CD8-positive, alpha-beta T cell (primary cell): ENCODE measurements at regions of chr1 and their contacts with region 1.

Region 1: DNA sequence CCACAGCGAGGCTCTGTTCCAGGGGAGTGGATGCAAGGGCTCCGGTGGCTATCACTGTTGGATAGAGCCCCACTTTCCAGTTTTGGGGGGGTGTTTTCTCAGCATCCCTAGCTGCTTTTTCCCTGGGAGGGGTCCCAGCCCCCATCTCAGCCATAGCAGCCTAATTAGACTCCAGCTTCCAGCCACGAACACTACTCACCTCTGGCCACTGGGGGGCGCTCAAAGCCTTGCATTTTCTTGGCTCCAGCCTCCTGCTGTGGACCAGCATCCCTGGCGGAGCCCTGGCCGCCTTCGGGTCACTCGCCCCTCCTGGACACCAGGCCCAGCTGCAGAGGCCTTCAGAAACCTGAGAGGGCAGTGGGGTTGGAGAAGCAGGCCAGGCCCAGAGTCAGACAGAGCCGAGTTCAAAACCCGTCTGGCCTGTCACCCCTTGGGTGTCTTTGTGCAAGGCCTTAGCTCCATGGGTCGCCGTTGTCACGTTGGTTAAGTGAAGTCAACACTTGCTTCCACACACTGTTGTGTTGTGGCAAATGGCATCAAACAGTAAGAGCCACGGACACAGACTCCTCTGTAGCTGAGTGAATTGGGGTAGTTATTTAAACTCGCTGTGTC is 93.5 kb upstream of the ACTL8 start:
- DNase-seq: peak; percentile 6 to 64 (median 42)
- ATAC-seq: no peak
- H3K4me3 ChIP-seq: no peak overlapping the region
- H3K4me3 Mint-ChIP-seq: no peak overlapping the region
- H3K27ac ChIP-seq: no peak overlapping the region
- H3K27ac Mint-ChIP-seq: no peak overlapping the region
- H3K4me1 ChIP-seq: no peaks in the 10 kb centered on the region
- H3K4me1 Mint-ChIP-seq: no peaks in the 10 kb centered on the region
- H3K27me3 ChIP-seq: no peaks in the 10 kb centered on the region
- H3K27me3 Mint-ChIP-seq: no peaks in the 10 kb centered on the region
- CTCF ChIP-seq: peak; percentile 84

Region 2: DNA sequence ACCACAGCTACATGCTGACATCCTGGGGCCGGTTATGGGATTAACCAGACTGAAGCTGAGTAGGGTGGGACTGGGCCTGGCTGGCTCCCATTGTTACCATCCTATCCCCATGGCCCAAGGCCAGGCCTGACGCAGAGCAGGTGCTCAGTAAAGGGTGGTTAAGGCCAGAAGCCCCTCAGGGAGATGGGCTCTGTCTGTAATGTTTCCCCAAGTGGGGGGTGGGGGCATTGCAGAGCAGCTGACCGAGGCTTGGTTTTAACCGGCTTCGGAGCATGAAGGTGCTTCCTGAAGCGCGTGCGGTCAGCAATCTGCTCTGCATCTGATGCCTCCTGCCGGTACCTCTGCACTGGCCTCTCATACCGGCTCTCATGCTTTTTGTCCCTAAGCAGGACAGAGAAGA is 10.1 kb after region 1 on chr1:
- CTCF ChIA-PET with region 1: interaction called, 11 read pairs
- POLR2A ChIA-PET with region 1: no interaction called
- intact Hi-C with region 1: no loop called
- DNase-seq: no peak
- ATAC-seq: no peak
- H3K4me3 ChIP-seq: no peak overlapping the region
- H3K4me3 Mint-ChIP-seq: no peak overlapping the region
- H3K27ac ChIP-seq: no peak overlapping the region
- H3K27ac Mint-ChIP-seq: no peak overlapping the region
- H3K4me1 ChIP-seq: no peaks in the 10 kb centered on the region
- H3K4me1 Mint-ChIP-seq: no peaks in the 10 kb centered on the region
- H3K27me3 ChIP-seq: no peaks in the 10 kb centered on the region
- H3K27me3 Mint-ChIP-seq: peaks cover 3% of the 10 kb centered on the region
- CTCF ChIP-seq: no peak

Region 3: DNA sequence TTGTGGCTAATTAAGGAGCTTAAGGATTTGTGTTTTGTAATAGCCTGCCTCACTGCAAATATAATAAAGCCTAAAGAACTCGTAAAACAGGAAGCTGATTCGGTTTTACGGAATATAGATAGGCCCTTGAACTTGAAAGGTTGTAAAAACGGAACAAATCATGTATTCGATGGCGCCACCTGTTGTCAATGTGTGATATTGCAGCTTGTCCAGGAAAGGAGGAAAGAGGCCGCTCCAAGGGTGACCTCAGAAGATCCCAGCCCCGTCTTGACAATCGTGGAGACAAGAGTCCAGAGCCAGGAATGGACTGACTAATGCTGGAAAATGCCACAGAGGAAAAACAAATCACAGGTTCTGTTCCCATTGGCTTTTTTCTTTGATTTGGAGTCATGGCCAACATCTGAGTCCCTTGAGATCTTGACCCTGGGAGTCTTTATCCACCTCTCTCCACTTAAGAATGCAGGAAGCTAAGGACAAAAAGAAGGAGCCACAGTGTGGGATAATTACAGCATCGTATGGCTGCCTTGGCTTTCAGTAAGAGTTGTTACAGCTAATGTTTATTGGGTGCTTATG is 438.9 kb after region 1 on chr1:
- CTCF ChIA-PET with region 1: interaction called, 9 read pairs
- POLR2A ChIA-PET with region 1: no interaction called
- intact Hi-C with region 1: loop called in 1 of 2 experiments (anchors 2 kb)
- DNase-seq: peak in 7 of 9 experiments; percentile 5 to 54 (median 39)
- ATAC-seq: no peak
- H3K4me3 ChIP-seq: no peak overlapping the region
- H3K4me3 Mint-ChIP-seq: no peak overlapping the region
- H3K27ac ChIP-seq: no peak overlapping the region
- H3K27ac Mint-ChIP-seq: no peak overlapping the region
- H3K4me1 ChIP-seq: no peaks in the 10 kb centered on the region
- H3K4me1 Mint-ChIP-seq: no peaks in the 10 kb centered on the region
- H3K27me3 ChIP-seq: peaks cover 0 to 4% of the 10 kb centered on the region in 2 experiments
- H3K27me3 Mint-ChIP-seq: peaks cover 27% of the 10 kb centered on the region
- CTCF ChIP-seq: peak; percentile 65

Region 4: GRCh38 chr1:18299441-18300338 is 638.0 kb after region 1 on chr1:
- CTCF ChIA-PET with region 1: no interaction called
- POLR2A ChIA-PET with region 1: no interaction called
- intact Hi-C with region 1: loop called in 1 of 2 experiments (anchors 5 kb)
- DNase-seq: peak in 3 of 9 experiments; percentile 1 to 22 (median 14)
- ATAC-seq: no peak
- H3K4me3 ChIP-seq: no peak overlapping the region
- H3K4me3 Mint-ChIP-seq: no peak overlapping the region
- H3K27ac ChIP-seq: no peak overlapping the region
- H3K27ac Mint-ChIP-seq: no peak overlapping the region
- H3K4me1 ChIP-seq: no peaks in the 10 kb centered on the region
- H3K4me1 Mint-ChIP-seq: no peaks in the 10 kb centered on the region
- H3K27me3 ChIP-seq: no peaks in the 10 kb centered on the region
- H3K27me3 Mint-ChIP-seq: peaks cover 20% of the 10 kb centered on the region
- CTCF ChIP-seq: peak; percentile 68

Region 5: GRCh38 chr1:18575620-18576019 is 914.0 kb after region 1 on chr1:
- CTCF ChIA-PET with region 1: no interaction called
- POLR2A ChIA-PET with region 1: no interaction called
- intact Hi-C with region 1: loop called in 1 of 2 experiments (anchors 2 kb)
- DNase-seq: peak in 8 of 9 experiments; percentile 16 to 61 (median 47)
- ATAC-seq: no peak
- H3K4me3 ChIP-seq: no peak overlapping the region
- H3K4me3 Mint-ChIP-seq: no peak overlapping the region
- H3K27ac ChIP-seq: no peak overlapping the region
- H3K27ac Mint-ChIP-seq: no peak overlapping the region
- H3K4me1 ChIP-seq: no peaks in the 10 kb centered on the region
- H3K4me1 Mint-ChIP-seq: no peaks in the 10 kb centered on the region
- H3K27me3 ChIP-seq: peaks cover 0 to 3% of the 10 kb centered on the region in 2 experiments
- H3K27me3 Mint-ChIP-seq: peaks cover 10% of the 10 kb centered on the region
- CTCF ChIP-seq: no peak

Region 6: DNA sequence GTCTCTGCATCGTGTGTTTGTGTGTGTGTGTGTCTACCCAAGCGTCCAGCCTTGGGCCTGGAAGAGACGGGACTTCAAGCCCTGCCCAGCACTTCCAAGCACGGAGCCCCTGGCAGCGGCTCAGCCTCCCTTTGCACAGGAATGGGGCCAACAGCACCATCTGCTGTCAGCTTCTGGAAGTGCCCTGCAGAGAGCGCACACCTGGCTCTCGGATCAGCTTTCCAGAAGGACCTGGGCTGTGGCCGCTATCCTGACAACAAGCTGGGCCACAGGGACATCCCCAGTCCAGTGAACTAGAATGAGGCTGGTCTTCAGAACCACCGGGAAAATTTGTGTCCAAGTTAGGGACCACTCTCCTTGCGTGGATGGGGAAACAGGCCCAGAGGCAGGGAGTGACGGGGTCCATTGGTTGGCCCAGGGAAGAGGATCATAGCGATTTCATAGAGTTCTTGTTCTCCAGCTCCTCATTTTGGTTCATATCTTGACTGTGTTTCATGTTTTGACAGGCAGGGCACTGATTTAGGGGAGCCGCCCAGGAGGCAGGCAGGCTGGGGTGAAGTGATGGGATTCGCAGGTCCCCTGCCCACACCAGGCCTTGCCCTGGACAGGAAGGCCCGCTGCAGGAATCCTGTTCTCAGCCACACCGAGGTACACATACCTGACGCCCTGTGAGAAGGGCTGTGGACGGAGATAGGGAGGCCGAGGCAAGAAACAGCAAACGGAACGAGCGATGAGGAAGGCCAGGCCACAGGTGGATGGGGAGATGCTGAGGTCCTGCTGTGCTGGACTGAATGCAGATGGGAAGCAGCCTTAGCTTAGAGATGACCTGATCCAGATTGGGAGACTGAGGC is 1159.4 kb after region 1 on chr1:
- CTCF ChIA-PET with region 1: no interaction called
- POLR2A ChIA-PET with region 1: no interaction called
- intact Hi-C with region 1: loop called in 1 of 2 experiments (anchors 5 kb)
- DNase-seq: peak; percentile 28 to 73 (median 57)
- ATAC-seq: peak; percentile 29
- H3K4me3 ChIP-seq: no peak overlapping the region
- H3K4me3 Mint-ChIP-seq: no peak overlapping the region
- H3K27ac ChIP-seq: no peak overlapping the region
- H3K27ac Mint-ChIP-seq: no peak overlapping the region
- H3K4me1 ChIP-seq: no peaks in the 10 kb centered on the region
- H3K4me1 Mint-ChIP-seq: no peaks in the 10 kb centered on the region
- H3K27me3 ChIP-seq: peaks cover 0 to 7% of the 10 kb centered on the region in 2 experiments
- H3K27me3 Mint-ChIP-seq: peaks cover 53% of the 10 kb centered on the region
- CTCF ChIP-seq: peak; percentile 77